ENCODE measurements at regions of chr12 and their contacts with region 1.

Region 1: DNA sequence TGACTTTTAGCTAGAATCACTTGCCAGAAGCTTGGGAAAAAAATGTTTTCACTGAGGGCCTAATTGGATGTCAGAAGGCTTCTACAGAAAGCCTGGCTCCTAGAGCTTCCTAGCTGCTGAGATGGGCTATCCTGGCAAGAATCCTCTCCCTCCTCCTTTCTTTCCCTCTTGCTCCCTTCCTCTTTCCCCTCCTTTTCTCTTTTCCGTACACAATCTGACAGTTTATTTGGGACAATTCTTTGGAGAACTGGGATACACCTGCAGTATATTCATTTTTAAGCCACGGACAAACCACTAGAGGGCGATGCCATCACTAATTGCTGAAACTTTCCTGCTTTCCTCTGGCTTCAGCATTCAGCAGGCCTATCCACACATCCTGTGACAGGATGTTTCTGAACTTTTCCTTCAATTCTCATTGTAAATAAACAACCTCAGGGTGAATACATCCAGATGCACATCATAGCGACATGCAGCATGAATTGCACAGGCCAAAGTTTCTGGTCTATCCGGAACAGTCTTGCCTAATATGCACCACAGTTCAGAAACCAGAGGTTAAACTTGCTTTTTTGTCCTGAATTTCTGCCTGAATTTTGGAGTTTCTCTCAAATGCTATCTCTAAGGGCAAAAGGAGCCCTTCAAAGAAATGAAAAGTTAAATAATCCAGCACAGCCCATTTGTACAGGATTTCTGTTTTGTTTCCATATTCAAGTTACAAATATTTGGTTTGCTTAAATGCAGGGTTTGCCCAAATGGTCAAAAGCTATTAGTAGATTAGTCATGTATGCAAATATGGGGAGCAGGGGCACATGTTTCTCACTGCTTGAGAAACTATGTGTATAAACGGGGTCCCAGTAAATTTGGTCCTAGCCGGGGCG is 142.8 kb downstream of the PAWR start:
- DNase-seq: peak; percentile 49 to 90

Region 2: GRCh38 chr12:79407671-79408622 is 140.0 kb before region 1 on chr12:
- in situ Hi-C with region 1: loop called (anchors 25 kb)
- DNase-seq: peak in 1 of 2 experiments; percentile 91